Activated B cell treated with CpG ODN at 0.5 μM for 24 hours (primary cell): ENCODE measurements at regions of chr15 and their contacts with region 1.

Region 1: DNA sequence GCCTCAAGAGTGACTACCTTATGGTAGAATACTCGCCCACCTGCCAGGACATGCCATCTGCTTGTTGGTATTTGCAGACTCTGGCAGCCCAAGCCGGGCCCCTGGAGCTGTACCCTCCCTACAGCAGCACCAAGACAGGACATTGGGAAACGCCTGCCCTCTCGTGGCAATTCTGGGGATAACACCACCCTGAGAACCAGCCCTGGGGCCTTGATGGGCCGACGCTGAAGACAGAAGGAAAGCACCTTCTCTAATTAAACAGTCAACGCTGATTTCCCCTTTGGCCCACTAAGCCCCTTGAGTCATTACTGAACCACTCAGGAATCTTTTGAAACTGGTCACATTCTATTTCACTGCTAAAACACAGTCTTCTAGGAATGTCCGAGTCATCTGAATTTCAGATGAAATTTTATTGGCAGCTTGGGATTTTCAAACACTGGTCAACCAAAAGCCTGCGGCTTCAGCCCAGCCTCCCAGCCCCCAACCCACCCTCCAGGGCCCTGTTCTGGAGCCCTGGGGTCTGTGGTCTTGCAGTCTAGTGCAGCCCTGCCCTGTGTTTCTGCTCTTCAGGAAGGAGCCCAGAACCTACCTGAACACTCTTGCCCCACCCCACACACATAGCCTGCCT is 91.3 kb downstream of the TMEM266 start:
- DNase-seq: peak; percentile 75
- ATAC-seq: peak; percentile 95
- H3K4me3 Mint-ChIP-seq: no peak overlapping the region
- H3K27ac Mint-ChIP-seq: peak overlapping the region; percentile 41
- H3K4me1 Mint-ChIP-seq: peaks cover 18% of the 10 kb centered on the region
- H3K27me3 Mint-ChIP-seq: peaks cover 6% of the 10 kb centered on the region
- CTCF ChIP-seq: peak; percentile 41

Region 2: GRCh38 chr15:75732809-75733451 is 418.2 kb before region 1 on chr15:
- CTCF ChIA-PET with region 1: no interaction called
- POLR2A ChIA-PET with region 1: no interaction called
- intact Hi-C with region 1: loop called (anchors 1 kb)
- DNase-seq: peak; percentile 48
- ATAC-seq: peak; percentile 78
- H3K4me3 Mint-ChIP-seq: no peak overlapping the region
- H3K27ac Mint-ChIP-seq: no peak overlapping the region
- H3K4me1 Mint-ChIP-seq: peaks cover 19% of the 10 kb centered on the region
- H3K27me3 Mint-ChIP-seq: peaks cover 9% of the 10 kb centered on the region
- CTCF ChIP-seq: no peak

Region 3: GRCh38 chr15:75928680-75929608 is 222.1 kb before region 1 on chr15:
- CTCF ChIA-PET with region 1: interaction called, 4 read pairs
- POLR2A ChIA-PET with region 1: no interaction called
- intact Hi-C with region 1: loop called (anchors 5 kb)
- DNase-seq: no peak
- ATAC-seq: no peak
- H3K4me3 Mint-ChIP-seq: no peak overlapping the region
- H3K27ac Mint-ChIP-seq: no peak overlapping the region
- H3K4me1 Mint-ChIP-seq: peaks cover 36% of the 10 kb centered on the region
- H3K27me3 Mint-ChIP-seq: no peaks in the 10 kb centered on the region
- CTCF ChIP-seq: no peak